PC-9 (cell line): ENCODE measurements at regions of chr11 and their contacts with region 1.

Region 1: DNA sequence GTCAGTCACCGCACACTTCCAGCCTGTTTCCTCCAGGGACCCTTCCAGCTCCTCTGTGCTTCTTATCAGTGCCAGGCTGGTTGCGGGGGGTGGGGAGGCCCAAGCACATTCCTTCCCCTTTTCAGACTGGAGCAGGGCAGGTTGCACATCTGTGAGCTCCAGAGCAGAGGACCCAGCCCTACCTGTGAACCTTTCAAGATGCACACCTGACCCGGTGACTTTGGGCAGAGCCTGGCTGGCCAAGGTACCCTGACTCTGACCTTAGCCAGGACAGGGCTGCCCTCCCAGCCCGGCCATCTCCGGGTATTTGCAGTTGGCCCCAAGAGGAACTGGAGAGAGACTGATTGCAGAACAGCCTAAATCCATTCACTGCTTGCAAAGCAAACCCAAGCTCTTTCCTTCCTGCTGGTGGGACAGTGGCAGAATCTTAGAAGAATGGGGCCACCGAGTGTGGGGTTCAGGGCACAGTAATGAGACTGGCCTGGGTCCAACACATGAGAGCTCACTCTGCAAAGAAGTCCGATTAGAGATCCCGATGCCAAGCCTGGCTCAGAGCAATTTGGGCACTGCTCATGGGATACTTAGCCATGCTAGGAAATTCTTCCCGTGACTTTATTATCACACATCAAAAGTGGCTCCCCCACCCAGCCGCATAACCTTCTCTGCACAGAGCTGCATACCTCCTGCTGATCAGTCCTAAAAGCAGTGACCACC is 64.7 kb upstream of the CCND1 start:
- DNase-seq: no peak
- H3K4me3 ChIP-seq: no peak overlapping the region
- H3K27ac ChIP-seq: no peak overlapping the region
- H3K4me1 ChIP-seq: no peaks in the 10 kb centered on the region
- H3K27me3 ChIP-seq: peaks cover 54% of the 10 kb centered on the region
- CTCF ChIP-seq: no peak

Region 2: DNA sequence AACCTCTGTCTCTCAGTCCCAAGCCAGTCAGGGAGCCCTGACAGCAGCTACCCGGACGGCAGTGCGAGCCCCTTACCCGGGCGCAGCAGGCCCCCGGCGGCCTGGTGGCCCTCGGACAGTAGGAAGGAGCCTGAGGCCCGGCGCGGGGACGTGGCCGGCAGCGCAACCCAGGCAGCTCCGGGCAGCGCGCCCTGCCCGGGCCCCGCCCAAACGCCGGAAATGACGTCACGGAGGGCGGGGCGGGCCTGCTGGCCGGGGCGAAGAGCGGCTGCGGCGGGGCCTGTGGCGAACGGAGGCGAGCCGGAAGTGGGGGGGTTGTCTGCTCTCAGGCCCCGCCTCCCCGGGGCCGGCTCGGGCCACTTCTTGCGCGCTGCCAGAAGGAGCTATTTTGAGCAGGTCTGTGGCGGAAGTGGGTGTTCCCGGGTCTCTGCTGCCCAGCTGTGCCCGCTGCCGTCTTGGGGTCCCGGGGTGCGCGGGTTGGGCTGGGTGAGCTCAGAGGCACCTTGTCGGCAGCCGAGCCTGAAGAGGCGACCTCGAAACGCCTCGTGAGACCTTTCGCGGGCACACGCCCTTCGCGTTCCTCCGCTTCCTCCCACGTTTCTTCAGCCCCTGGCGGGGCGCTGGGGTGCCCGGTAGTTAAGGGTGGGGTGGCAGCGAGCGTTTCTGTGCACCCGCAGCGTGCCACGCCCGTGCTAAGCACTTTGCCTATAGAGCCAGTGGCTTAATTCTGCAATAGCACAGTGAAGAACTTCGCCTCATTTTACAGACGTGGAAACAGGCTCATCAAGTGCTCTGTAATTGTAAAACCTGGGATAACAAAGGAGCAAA is 1304.2 kb before region 1 on chr11 and contains the start of gene C11orf24:
- CTCF ChIA-PET with region 1: no interaction called
- POLR2A ChIA-PET with region 1: no interaction called
- intact Hi-C with region 1: no loop called
- DNase-seq: peak; percentile 91 to 98
- H3K4me3 ChIP-seq: peak within 1 kb of the TSS; percentile 77
- H3K27ac ChIP-seq: peak within 1 kb of the TSS; percentile 63
- H3K4me1 ChIP-seq: peaks cover 13% of the 10 kb centered on the region
- H3K27me3 ChIP-seq: no peaks in the 10 kb centered on the region
- CTCF ChIP-seq: no peak
- total RNA-seq, gene C11orf24: 27.2 and 37.7 TPM in 2 replicates

Region 3: GRCh38 chr11:69231466-69232018 is 344.7 kb before region 1 on chr11:
- CTCF ChIA-PET with region 1: interaction called, 16 read pairs
- POLR2A ChIA-PET with region 1: no interaction called
- intact Hi-C with region 1: no loop called
- DNase-seq: no peak
- H3K4me3 ChIP-seq: no peak overlapping the region
- H3K27ac ChIP-seq: no peak overlapping the region
- H3K4me1 ChIP-seq: no peaks in the 10 kb centered on the region
- H3K27me3 ChIP-seq: no peaks in the 10 kb centered on the region
- CTCF ChIP-seq: no peak

Region 4: GRCh38 chr11:69636312-69637197 is 60.3 kb after region 1 on chr11:
- CTCF ChIA-PET with region 1: no interaction called
- POLR2A ChIA-PET with region 1: interaction called, 28 read pairs
- intact Hi-C with region 1: no loop called
- DNase-seq: peak; percentile 73 to 94
- H3K4me3 ChIP-seq: peak overlapping the region; percentile 99
- H3K27ac ChIP-seq: peak overlapping the region; percentile 93
- H3K4me1 ChIP-seq: peaks cover 22% of the 10 kb centered on the region; the same call in 1 of the 2 replicates
- H3K27me3 ChIP-seq: no peaks in the 10 kb centered on the region
- CTCF ChIP-seq: no peak